Activated B cell treated with CpG ODN at 0.5 μM for 24 hours (primary cell): ENCODE measurements at regions of chr6 and their contacts with region 1.

Region 1: GRCh38 chr6:154675602-154676088 is 57.6 kb upstream of the SCAF8 start:
- DNase-seq: peak; percentile 63
- ATAC-seq: peak; percentile 100
- H3K4me3 Mint-ChIP-seq: no peak overlapping the region
- H3K27ac Mint-ChIP-seq: no peak overlapping the region
- H3K4me1 Mint-ChIP-seq: no peaks in the 10 kb centered on the region
- H3K27me3 Mint-ChIP-seq: no peaks in the 10 kb centered on the region
- CTCF ChIP-seq: peak; percentile 91

Region 2: DNA sequence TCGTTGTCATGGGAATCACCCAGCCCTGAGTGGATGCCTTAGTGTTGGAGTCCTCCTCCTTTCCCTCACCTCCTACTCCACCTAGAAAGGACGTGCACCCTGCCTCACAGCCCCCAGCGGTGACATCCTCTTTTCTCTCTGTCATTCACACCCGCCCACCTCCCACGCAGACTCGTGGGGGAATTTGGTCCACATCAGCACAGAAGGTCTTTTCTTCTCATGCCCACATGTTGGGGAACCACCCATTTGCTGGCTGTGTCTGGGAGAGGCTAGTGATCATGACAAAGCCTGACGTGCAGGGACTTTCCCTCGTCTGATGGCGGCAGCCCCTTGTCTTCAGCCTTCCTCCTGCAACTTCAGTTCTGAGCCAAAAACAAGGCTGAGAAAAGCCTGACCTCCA is 69.2 kb before region 1 on chr6:
- CTCF ChIA-PET with region 1: no interaction called
- POLR2A ChIA-PET with region 1: no interaction called
- intact Hi-C with region 1: no loop called
- DNase-seq: peak; percentile 23
- ATAC-seq: peak; percentile 95
- H3K4me3 Mint-ChIP-seq: peak overlapping the region; percentile 3
- H3K27ac Mint-ChIP-seq: no peak overlapping the region
- H3K4me1 Mint-ChIP-seq: peaks cover 32% of the 10 kb centered on the region
- H3K27me3 Mint-ChIP-seq: no peaks in the 10 kb centered on the region
- CTCF ChIP-seq: no peak

Region 3: DNA sequence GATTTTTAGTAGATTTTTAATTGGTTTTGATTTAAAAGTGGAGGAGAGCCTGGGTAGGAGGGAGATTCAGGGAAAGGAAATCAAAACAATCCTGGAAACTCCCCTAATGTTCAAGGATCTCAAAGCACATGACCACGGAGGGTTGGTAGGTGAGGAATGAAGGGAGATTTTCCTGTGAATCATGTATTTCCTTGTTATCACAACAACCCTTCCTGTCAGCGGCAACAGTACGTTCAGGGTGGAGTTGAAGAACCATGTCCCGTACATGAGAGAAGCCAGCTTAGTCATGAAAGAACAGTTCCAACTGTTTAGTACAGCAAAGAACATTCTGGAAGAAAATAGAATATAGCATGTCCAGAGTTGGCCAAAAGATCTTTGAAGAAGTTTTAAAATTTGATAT is 21.8 kb before region 1 on chr6:
- CTCF ChIA-PET with region 1: no interaction called
- POLR2A ChIA-PET with region 1: no interaction called
- intact Hi-C with region 1: no loop called
- DNase-seq: no peak
- ATAC-seq: no peak
- H3K4me3 Mint-ChIP-seq: no peak overlapping the region
- H3K27ac Mint-ChIP-seq: no peak overlapping the region
- H3K4me1 Mint-ChIP-seq: no peaks in the 10 kb centered on the region
- H3K27me3 Mint-ChIP-seq: peaks cover 5% of the 10 kb centered on the region
- CTCF ChIP-seq: no peak

Region 4: GRCh38 chr6:154705471-154706113 is 29.9 kb after region 1 on chr6:
- CTCF ChIA-PET with region 1: interaction called, 12 read pairs
- POLR2A ChIA-PET with region 1: no interaction called
- intact Hi-C with region 1: no loop called
- DNase-seq: no peak
- ATAC-seq: no peak
- H3K4me3 Mint-ChIP-seq: no peak overlapping the region
- H3K27ac Mint-ChIP-seq: no peak overlapping the region
- H3K4me1 Mint-ChIP-seq: no peaks in the 10 kb centered on the region
- H3K27me3 Mint-ChIP-seq: peaks cover 4% of the 10 kb centered on the region
- CTCF ChIP-seq: no peak

Region 5: DNA sequence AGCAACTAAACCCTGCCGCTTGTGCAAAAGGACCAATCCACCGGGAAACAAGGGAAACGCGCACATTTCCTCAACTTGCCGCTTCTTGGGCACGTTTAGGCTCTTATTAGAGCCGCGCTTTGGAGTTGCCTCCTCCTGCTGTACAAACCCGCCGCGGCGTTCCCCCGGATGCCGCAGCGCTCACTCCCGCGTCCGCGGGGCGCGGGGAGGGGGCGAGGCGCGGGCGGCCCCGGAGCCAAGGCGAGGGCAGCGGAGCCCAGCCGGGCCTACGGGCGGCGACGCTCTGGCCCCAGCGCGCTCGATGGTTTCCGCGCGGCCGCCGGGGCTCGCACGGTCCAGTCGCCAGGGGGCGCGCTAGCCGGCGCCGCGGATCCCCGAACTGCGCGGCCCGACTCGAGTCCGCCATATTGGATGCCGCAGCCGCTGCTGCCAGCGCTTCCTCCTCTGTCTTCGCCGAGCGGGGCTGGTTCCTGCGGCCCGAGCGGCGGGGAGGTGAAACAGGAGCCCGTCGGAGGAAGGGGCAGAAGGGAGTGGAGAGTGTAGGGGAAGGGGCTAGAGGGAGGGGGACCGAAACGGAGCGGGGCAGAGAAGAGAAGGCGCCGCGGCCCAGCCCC is 57.5 kb after region 1 on chr6 and contains the start of gene SCAF8:
- CTCF ChIA-PET with region 1: interaction called, 5 read pairs
- POLR2A ChIA-PET with region 1: interaction called, 4 read pairs
- intact Hi-C with region 1: loop called (anchors 1 kb)
- DNase-seq: peak; percentile 94
- ATAC-seq: peak; percentile 77
- H3K4me3 Mint-ChIP-seq: peak within 1 kb of the TSS; percentile 89
- H3K27ac Mint-ChIP-seq: peak within 1 kb of the TSS; percentile 98
- H3K4me1 Mint-ChIP-seq: peaks cover 41% of the 10 kb centered on the region
- H3K27me3 Mint-ChIP-seq: no peaks in the 10 kb centered on the region
- CTCF ChIP-seq: no peak
- total RNA-seq, gene SCAF8: 56.8 and 65.2 TPM in 2 replicates

Region 6: GRCh38 chr6:154814063-154814462 is 138.4 kb after region 1 on chr6:
- CTCF ChIA-PET with region 1: interaction called, 222 read pairs
- POLR2A ChIA-PET with region 1: interaction called, 3 read pairs
- intact Hi-C with region 1: no loop called
- DNase-seq: no peak
- ATAC-seq: peak; percentile 39
- H3K4me3 Mint-ChIP-seq: peak overlapping the region; percentile 13
- H3K27ac Mint-ChIP-seq: peak overlapping the region; percentile 64
- H3K4me1 Mint-ChIP-seq: peaks cover 45% of the 10 kb centered on the region
- H3K27me3 Mint-ChIP-seq: no peaks in the 10 kb centered on the region
- CTCF ChIP-seq: no peak

Region 7: GRCh38 chr6:155248008-155249001 is 572.7 kb after region 1 on chr6:
- CTCF ChIA-PET with region 1: interaction called, 7 read pairs
- POLR2A ChIA-PET with region 1: no interaction called
- intact Hi-C with region 1: loop called (anchors 1 kb)
- DNase-seq: no peak
- ATAC-seq: peak; percentile 49
- H3K4me3 Mint-ChIP-seq: no peak overlapping the region
- H3K27ac Mint-ChIP-seq: peak overlapping the region; percentile 25
- H3K4me1 Mint-ChIP-seq: peaks cover 3% of the 10 kb centered on the region
- H3K27me3 Mint-ChIP-seq: no peaks in the 10 kb centered on the region
- CTCF ChIP-seq: no peak

Region 8: GRCh38 chr6:155530219-155530834 is 854.7 kb after region 1 on chr6:
- CTCF ChIA-PET with region 1: no interaction called
- POLR2A ChIA-PET with region 1: no interaction called
- intact Hi-C with region 1: loop called (anchors 10 kb)
- DNase-seq: no peak
- ATAC-seq: peak; percentile 37
- H3K4me3 Mint-ChIP-seq: no peak overlapping the region
- H3K27ac Mint-ChIP-seq: no peak overlapping the region
- H3K4me1 Mint-ChIP-seq: peaks cover 9% of the 10 kb centered on the region
- H3K27me3 Mint-ChIP-seq: no peaks in the 10 kb centered on the region
- CTCF ChIP-seq: no peak